ENCODE measurements at regions of chr3 and their contacts with region 1.

Region 1: DNA sequence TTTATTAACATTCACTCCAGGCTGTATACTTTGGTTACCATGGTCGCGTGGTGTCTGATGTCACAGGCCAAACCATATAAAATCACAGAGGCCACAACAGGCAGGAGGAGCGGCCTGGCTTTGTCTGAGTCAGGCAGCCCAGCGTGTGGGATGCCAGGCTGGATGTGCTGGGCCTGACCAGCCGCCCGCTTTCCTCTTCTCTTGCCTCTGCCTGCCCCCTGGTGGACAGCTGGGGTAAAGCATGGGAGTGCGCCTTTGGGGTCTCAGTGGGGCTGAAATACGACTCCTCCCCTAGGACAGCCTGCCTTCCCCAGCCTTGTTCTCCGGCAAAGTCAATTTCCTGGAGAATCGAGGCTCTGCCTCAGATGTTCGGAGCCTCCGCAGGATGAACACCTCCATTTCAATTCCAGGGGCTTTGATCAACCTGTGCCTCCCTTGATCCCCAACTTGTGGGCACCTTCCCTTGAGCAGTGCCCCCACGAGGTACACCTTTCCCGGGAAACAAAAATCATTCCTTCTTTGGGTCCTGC is 78.2 kb downstream of the CCNL1 start:
- DNase-seq: peak; percentile 88 to 91
- ATAC-seq: peak; percentile 82 to 89 (median 85)
- H3K4me3 ChIP-seq: no peak overlapping the region
- H3K27ac ChIP-seq: peak overlapping the region in 4 of 10 donors; percentile 11 to 36 (median 26)
- H3K4me1 ChIP-seq: peaks cover 0 to 44% (median 22%) of the 10 kb centered on the region in 9 donors
- H3K27me3 ChIP-seq: no peaks in the 10 kb centered on the region
- CTCF ChIP-seq: peak in 8 of 9 donors; percentile 90 to 98 (median 96)

Region 2: GRCh38 chr3:155854141-155854940 is 1227.4 kb before region 1 on chr3 and contains the start of gene SLC33A1:
- intact Hi-C with region 1: loop called in 1 of 10 experiments (anchors 10 kb)
- DNase-seq: peak; percentile 98 to 99
- ATAC-seq: peak; percentile 98 to 99 (median 99)
- H3K4me3 ChIP-seq: peak within 1 kb of the TSS; percentile 74 to 100 (median 89)
- H3K27ac ChIP-seq: peak within 1 kb of the TSS; percentile 72 to 96 (median 92)
- H3K4me1 ChIP-seq: peaks cover 16 to 49% (median 45%) of the 10 kb centered on the region in 9 donors
- H3K27me3 ChIP-seq: no peaks in the 10 kb centered on the region
- CTCF ChIP-seq: no peak
- total RNA-seq, gene SLC33A1: 18.9 to 35.3 (median 25.8) TPM

Region 3: GRCh38 chr3:156535162-156535627 is 546.6 kb before region 1 on chr3:
- intact Hi-C with region 1: loop called in 5 of 10 experiments (anchors 5 to 10 kb)
- DNase-seq: peak; percentile 25 to 73
- ATAC-seq: peak; percentile 85 to 98 (median 94)
- H3K4me3 ChIP-seq: no peak overlapping the region
- H3K27ac ChIP-seq: peak overlapping the region; percentile 19 to 73 (median 65)
- H3K4me1 ChIP-seq: peaks cover 2 to 32% (median 17%) of the 10 kb centered on the region in 9 donors
- H3K27me3 ChIP-seq: no peaks in the 10 kb centered on the region
- CTCF ChIP-seq: peak in 7 of 9 donors; percentile 12 to 56 (median 37)

Region 4: GRCh38 chr3:156554842-156555687 is 526.7 kb before region 1 on chr3 and contains the start of gene SSR3:
- intact Hi-C with region 1: loop called in 1 of 10 experiments (anchors 5 kb)
- DNase-seq: peak; percentile 99
- ATAC-seq: peak; percentile 99 to 100 (median 100)
- H3K4me3 ChIP-seq: peak within 1 kb of the TSS; percentile 63 to 96 (median 80)
- H3K27ac ChIP-seq: peak within 1 kb of the TSS; percentile 76 to 97 (median 92)
- H3K4me1 ChIP-seq: peaks cover 0 to 64% (median 45%) of the 10 kb centered on the region in 9 donors
- H3K27me3 ChIP-seq: no peaks in the 10 kb centered on the region
- CTCF ChIP-seq: peak in 5 of 9 donors; percentile 11 to 41 (median 25)
- total RNA-seq, gene SSR3: 172 to 256 (median 216) TPM

Region 5: GRCh38 chr3:156816800-156817645 is 264.7 kb before region 1 on chr3:
- intact Hi-C with region 1: loop called in 2 of 10 experiments (anchors 10 kb)
- DNase-seq: peak; percentile 74 to 88
- ATAC-seq: peak; percentile 90 to 96 (median 93)
- H3K4me3 ChIP-seq: peak overlapping the region; percentile 54 to 73 (median 64)
- H3K27ac ChIP-seq: peak overlapping the region; percentile 79 to 94 (median 82)
- H3K4me1 ChIP-seq: peaks cover 0 to 28% (median 17%) of the 10 kb centered on the region in 9 donors
- H3K27me3 ChIP-seq: no peaks in the 10 kb centered on the region
- CTCF ChIP-seq: peak in 3 of 9 donors; percentile 12 to 41 (median 26)

Region 6: DNA sequence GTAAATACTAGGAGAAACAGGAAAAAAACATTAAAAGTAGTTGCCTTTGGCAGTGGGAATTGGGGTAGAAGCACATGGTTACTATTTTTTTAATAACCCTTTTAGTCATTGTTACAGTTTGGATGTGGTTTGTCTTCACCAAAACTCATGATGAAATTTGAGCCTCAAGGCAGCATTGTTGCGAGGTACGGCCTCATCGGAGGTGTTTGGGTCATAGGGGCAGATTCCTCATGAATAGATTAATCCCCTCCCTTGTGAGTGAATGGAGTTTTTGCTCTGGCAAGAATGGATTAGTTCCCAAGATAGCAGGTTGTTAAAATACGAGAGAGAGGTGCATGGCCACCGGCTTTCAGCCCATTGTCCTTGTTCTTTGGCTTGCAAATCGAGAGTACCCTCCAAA is 163.0 kb before region 1 on chr3:
- intact Hi-C with region 1: loop called in 1 of 10 experiments (anchors 10 kb)
- DNase-seq: no peak
- ATAC-seq: no peak
- H3K4me3 ChIP-seq: no peak overlapping the region
- H3K27ac ChIP-seq: no peak overlapping the region
- H3K4me1 ChIP-seq: no peaks in the 10 kb centered on the region
- H3K27me3 ChIP-seq: no peaks in the 10 kb centered on the region
- CTCF ChIP-seq: no peak

Measured in heart right ventricle (tissue), 16 donors.